ENCODE measurements at regions of chr2 and their contacts with region 1.

Region 1: GRCh38 chr2:222707689-222708525 is 36.4 kb downstream of the MOGAT1 start:
- DNase-seq: peak; percentile 94
- H3K4me3 ChIP-seq: no peak overlapping the region
- H3K27ac ChIP-seq: no peak overlapping the region
- H3K4me1 ChIP-seq: peaks cover 0 to 24% (median 8%) of the 10 kb centered on the region in 6 donors
- H3K27me3 ChIP-seq: peaks cover 0 to 23% (median 0%) of the 10 kb centered on the region in 7 donors
- CTCF ChIP-seq: peak; percentile 81 to 96 (median 93)
- POLR2A ChIP-seq: no peak

Region 2: DNA sequence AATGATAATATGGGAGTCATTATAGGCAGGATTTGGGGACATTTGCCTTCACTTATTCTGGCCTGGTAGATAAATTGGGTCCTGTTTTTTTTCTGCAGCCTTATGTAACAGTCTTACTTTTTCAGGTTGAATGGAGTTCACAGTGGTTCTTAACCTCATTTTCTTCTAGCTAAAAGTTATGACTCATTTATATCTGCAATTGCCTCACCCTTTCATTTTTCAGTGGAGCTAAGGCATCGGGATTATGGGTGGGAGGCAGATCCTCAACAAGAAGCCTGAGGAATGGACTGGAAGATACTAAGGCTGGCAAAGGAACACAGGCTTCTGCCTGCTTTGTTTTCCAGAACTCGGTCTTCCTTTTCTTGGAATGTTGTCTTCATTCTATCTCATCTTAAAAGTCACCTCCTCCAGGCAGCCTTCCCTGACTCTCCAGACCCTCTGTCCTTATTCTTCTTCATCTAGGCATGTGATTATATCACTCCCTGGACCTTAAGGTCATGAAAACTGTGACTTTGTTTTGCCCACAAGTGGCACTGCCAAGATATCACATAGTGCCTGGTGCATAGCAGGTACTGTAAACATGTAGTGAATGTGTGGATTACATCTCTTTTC is 111.9 kb after region 1 on chr2:
- intact Hi-C with region 1: no loop called
- DNase-seq: no peak
- H3K4me3 ChIP-seq: no peak overlapping the region
- H3K27ac ChIP-seq: no peak overlapping the region
- H3K4me1 ChIP-seq: no peaks in the 10 kb centered on the region
- H3K27me3 ChIP-seq: no peaks in the 10 kb centered on the region
- CTCF ChIP-seq: no peak
- POLR2A ChIP-seq: no peak

Region 3: DNA sequence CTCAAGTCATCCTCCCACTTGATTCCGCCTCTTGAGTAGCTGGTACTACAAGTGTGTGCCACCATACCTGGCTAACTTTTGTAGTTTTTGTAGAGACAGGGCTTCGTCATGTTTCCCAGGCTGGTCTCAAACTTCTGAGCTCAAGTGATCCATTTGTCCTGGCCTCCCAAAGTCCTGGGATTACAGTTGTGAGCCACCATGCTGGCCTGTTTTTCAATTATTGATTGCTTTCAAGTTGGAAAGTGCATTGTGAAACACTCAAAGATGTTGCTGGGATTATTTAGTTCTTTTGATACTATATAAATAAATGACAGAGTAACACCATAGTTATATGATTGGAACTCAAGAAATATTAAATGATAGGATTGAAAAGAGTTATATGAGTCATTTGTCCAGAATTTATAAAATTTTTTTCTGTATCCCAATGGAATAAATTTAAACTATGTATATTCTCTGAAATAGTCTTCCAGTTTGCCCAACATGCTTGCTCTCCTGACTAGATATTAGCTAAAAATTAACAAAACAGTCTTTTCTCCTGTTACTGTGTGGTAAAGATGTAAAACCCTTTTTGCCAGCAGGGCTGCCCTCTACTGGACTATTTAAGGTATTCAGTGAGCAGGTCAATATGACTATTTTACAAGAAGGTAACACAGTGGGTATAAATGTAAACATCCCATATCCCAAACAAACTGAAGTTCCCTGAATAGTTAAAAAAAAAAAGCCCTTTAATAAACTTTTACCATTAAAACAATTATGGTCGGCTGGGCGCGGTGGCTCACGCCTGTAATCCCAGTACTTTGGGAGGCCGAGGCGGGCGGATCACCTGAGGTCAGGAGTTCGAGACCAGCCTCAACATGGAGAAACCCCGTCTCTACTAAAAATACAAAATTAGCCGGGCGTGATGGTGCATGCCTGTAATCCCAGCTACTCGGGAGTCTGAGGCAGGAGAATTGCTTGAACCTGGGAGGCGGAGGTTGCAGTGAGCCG is 195.6 kb after region 1 on chr2:
- intact Hi-C with region 1: loop called (anchors 2 kb)
- DNase-seq: no peak
- H3K4me3 ChIP-seq: no peak overlapping the region
- H3K27ac ChIP-seq: no peak overlapping the region
- H3K4me1 ChIP-seq: peaks cover 0 to 55% (median 3%) of the 10 kb centered on the region in 6 donors
- H3K27me3 ChIP-seq: no peaks in the 10 kb centered on the region
- CTCF ChIP-seq: peak in 10 of 11 experiments; percentile 24 to 76 (median 66)
- POLR2A ChIP-seq: no peak

Measured in spleen (tissue), 13 donors.